Breast epithelium (tissue), 4 donors: ENCODE measurements at regions of chr16 and their contacts with region 1.

Region 1: DNA sequence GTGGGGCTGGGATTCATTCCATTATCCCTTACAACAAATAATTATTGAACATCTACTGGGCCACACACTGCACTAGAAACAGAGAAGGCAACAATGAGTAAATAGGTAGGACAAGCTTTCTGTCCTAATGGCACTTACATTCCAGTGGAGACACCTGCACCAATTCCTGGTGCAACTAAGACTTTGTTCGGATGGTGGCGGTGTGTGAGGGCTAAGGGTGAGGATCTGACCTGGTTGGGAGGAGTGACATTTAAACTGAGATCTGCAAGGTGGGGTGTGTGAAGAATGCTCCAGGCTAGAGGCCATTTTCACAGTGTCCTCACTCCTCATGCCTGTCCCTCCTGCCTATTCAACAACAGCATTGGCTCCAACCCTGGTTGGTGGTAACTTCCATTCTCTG is 510.0 kb downstream of the XYLT1 start:
- DNase-seq: no peak
- H3K4me3 ChIP-seq: no peak overlapping the region
- H3K27ac ChIP-seq: no peak overlapping the region
- H3K4me1 ChIP-seq: no peaks in the 10 kb centered on the region
- H3K27me3 ChIP-seq: no peaks in the 10 kb centered on the region
- CTCF ChIP-seq: no peak
- POLR2A ChIP-seq: no peak

Region 2: DNA sequence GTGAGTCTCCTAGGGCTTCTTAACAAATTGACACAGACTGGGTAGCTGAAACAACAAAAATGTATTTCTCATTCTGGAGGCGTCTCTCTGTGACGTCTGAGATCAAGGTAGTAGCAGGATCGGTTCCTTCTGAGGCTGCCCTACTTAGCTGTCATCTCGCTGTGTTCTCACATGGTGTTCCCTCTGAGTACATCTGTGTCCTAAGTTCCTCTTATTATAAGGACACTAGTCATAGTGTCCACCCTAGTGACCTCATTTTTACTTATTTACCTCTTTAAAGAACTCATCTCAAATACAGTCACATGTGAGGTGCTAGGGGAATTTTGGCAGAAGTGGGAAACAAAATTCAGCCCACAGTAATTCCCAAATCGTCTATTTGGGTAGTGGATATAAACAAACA is 52.7 kb before region 1 on chr16:
- intact Hi-C with region 1: no loop called
- DNase-seq: no peak
- H3K4me3 ChIP-seq: no peak overlapping the region
- H3K27ac ChIP-seq: no peak overlapping the region
- H3K4me1 ChIP-seq: no peaks in the 10 kb centered on the region
- H3K27me3 ChIP-seq: no peaks in the 10 kb centered on the region
- CTCF ChIP-seq: no peak
- POLR2A ChIP-seq: no peak

Region 3: GRCh38 chr16:16940351-16940750 is 20.4 kb before region 1 on chr16:
- intact Hi-C with region 1: loop called (anchors 1 kb)
- DNase-seq: no peak
- H3K4me3 ChIP-seq: no peak overlapping the region
- H3K27ac ChIP-seq: no peak overlapping the region
- H3K4me1 ChIP-seq: no peaks in the 10 kb centered on the region
- H3K27me3 ChIP-seq: peaks cover 0 to 3% of the 10 kb centered on the region in 2 donors
- CTCF ChIP-seq: no peak
- POLR2A ChIP-seq: no peak

Region 4: DNA sequence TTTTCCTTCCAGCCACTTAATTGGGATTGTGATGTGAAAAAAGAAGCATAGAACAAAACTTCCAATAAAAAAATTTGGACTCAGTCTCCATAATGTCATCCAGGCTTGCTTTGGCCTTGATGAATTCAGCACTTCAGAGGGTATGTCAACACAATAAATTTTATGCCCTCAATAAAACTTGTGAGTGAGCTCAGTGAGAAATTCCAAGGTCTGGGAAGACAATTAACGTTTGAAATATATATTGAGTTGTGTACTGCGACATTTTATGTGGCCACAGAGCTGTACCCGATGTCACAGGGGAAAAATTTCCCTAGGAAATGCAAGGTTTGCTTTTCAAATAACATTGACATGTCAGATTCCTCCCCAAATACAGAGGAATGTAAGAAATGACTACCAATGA is 13.4 kb after region 1 on chr16:
- intact Hi-C with region 1: no loop called
- DNase-seq: no peak
- H3K4me3 ChIP-seq: no peak overlapping the region
- H3K27ac ChIP-seq: no peak overlapping the region
- H3K4me1 ChIP-seq: no peaks in the 10 kb centered on the region
- H3K27me3 ChIP-seq: no peaks in the 10 kb centered on the region
- CTCF ChIP-seq: no peak
- POLR2A ChIP-seq: no peak

Region 5: DNA sequence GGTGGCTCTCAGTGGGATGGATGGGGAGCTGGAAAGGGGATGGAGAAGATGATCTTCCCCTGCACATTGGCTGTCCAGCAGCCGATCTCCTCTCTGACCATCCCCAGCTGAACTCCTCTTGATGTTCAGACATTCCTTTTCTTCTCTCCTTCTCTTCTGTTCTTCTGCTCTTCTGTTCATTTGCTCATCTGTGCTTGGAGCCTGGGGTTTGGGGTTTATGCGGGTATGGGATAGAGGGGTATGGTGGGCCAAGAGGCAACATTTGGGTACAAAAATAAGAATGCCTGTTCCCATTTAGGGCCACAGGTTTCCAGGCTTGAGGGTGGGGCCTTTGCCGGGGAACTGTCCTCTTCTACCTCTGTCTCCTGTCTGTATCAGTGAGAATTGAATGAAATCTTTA is 715.4 kb after region 1 on chr16:
- intact Hi-C with region 1: no loop called
- DNase-seq: no peak
- H3K4me3 ChIP-seq: no peak overlapping the region
- H3K27ac ChIP-seq: no peak overlapping the region
- H3K4me1 ChIP-seq: no peaks in the 10 kb centered on the region
- H3K27me3 ChIP-seq: no peaks in the 10 kb centered on the region
- CTCF ChIP-seq: no peak
- POLR2A ChIP-seq: no peak